ENCODE measurements at regions of chr5 and their contacts with region 1.

Region 1: GRCh38 chr5:126594676-126595485 is at the start of gene ALDH7A1:
- DNase-seq: peak; percentile 90
- ATAC-seq: peak; percentile 96
- total RNA-seq, gene ALDH7A1: 35.5 TPM

Region 2: DNA sequence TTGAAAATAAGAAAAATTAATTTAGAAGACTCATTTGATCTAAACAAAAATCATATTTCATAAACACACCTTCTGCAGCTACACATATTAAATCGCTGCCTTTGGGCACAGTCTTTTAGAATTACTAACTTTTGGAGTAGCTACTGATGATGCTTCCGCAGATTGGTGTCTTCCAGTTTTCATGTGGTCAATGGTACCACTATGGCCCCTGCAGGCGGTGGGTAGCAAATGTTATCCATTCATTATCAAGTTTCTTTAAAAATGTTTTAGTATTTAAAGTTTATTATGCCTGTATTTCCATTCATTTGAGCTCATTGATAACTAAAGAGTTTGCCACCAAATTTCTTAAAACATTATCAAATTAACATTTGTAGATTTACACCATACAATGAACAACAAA is 294.6 kb before region 1 on chr5:
- intact Hi-C with region 1: no loop called
- DNase-seq: no peak
- ATAC-seq: no peak

Region 3: DNA sequence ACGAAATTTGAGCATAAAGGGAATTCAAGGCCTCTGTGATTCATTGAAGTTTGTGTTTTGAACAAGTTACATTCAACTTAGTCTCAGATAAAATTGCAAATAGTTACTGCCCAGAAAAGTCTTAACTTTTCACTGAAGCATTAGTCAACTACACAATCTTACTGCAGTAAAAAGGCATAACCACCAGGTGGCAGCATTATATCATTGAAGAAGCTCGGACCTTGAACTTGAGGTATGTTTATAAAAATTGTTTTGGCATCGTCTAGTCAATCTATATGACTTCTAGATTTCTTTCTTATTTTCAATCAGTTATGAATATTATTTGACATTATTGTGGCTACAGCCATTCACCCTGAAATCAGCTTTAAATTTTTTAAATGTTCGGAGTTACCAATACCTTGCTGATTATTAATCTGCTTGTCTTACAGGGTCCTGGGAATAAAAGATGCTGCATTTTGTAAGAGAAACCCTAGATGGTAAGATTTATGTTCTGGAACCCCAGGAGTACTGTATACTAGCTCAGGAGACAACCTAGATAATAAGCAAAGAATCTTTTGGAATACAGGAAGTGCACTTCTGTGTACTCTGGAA is 255.6 kb before region 1 on chr5:
- intact Hi-C with region 1: loop called (anchors 2 kb)
- DNase-seq: no peak
- ATAC-seq: no peak

Region 4: DNA sequence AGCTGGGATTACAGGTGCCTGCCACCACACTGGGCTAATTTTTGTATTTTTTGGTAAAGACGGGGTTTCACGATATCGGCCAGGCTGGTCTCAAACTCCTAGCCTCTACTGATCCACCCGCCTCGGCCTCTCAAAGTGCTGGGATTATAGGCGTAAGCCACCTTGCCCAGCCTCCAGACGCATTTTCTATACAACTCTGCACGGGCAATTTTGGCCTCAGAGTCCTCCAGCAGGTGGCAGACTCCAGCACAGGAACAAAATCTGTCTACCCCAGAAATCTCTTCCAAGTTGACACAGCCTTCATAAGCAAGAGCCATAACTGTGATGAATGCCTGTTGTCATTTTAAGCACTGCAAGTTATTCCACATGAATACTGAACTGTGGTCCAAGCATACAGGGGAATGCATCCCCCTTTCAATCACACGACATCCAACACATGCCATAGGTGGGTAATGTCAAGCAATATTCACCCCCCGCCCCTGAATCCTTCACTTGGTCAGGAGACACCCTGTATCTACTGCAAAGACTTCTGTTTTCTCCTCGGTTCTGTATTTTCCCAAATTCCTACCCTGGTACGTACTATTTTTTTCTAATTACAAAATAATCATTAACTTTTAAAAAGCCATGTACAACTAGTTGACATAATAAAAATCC is 50.7 kb before region 1 on chr5:
- intact Hi-C with region 1: loop called (anchors 5 kb)
- DNase-seq: no peak
- ATAC-seq: no peak

Region 5: GRCh38 chr5:126576974-126577373 is 17.9 kb before region 1 on chr5:
- intact Hi-C with region 1: no loop called
- DNase-seq: no peak
- ATAC-seq: no peak

Measured in Right ventricle myocardium inferior (tissue), 1 donor.